Natural killer cell (primary cell): ENCODE measurements at regions of chr9 and their contacts with region 1.

Region 1: DNA sequence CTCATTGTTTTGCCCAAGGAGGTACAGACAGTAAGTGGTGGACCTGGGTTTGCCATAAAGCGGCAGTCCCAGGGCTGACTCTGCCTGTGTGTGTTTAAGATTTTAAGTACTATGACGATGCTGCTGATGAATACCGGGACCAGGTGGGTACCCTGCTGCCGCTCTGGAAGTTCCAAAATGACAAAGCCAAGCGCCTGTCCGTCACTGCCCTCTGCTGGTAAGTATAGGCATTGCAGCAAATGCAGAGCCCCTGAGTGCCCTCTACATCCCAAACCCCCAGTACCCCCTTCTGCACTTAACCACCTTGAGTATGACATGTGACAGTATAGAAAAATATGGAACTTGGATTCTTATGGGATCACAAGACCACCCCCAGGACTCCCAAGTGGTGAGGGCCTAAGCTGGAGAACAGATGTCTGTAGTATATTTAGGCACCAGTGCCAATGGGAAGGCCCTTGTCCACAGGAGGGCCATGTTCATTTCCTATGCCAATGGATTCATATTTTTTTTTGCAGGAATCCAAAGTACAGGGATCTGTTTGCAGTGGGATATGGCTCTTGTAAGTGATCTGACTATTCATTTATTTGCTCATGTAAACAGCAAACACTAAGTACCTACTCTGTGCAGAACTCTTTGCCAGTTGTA is 22.0 kb downstream of the ENHO start:
- DNase-seq: peak; percentile 66 to 82
- ATAC-seq: peak; percentile 77 to 99 (median 93)
- H3K4me3 ChIP-seq: no peak overlapping the region
- H3K4me3 Mint-ChIP-seq: no peak overlapping the region
- H3K27ac ChIP-seq: no peak overlapping the region
- H3K27ac Mint-ChIP-seq: no peak overlapping the region
- H3K4me1 ChIP-seq: no peaks in the 10 kb centered on the region
- H3K4me1 Mint-ChIP-seq: no peaks in the 10 kb centered on the region
- H3K27me3 ChIP-seq: no peaks in the 10 kb centered on the region
- H3K27me3 Mint-ChIP-seq: peaks cover 25 to 32% of the 10 kb centered on the region in 2 donors
- CTCF ChIP-seq: peak; percentile 93

Region 2: DNA sequence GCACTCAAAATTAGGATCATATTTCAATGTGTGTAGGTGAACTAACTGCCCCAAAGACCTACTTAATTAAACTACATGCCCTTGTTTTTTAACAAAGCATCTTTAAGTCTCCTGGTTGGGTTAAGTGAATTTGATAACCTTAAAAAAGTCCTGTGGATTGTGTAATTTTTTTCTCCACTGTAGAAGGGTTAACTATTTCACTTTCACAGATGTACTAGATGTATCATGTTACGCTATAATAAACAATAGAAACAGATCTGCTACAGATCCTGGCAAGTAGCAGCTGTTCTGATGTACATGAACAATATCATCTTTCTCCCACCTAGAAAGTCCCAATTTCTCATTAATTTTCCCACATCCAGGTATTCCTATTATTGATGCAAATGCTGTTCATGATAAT is 190.5 kb before region 1 on chr9:
- intact Hi-C with region 1: no loop called
- DNase-seq: no peak
- ATAC-seq: no peak
- H3K4me3 ChIP-seq: no peak overlapping the region
- H3K4me3 Mint-ChIP-seq: no peak overlapping the region
- H3K27ac ChIP-seq: no peak overlapping the region
- H3K27ac Mint-ChIP-seq: no peak overlapping the region
- H3K4me1 ChIP-seq: no peaks in the 10 kb centered on the region
- H3K4me1 Mint-ChIP-seq: no peaks in the 10 kb centered on the region
- H3K27me3 ChIP-seq: no peaks in the 10 kb centered on the region
- H3K27me3 Mint-ChIP-seq: no peaks in the 10 kb centered on the region
- CTCF ChIP-seq: no peak

Region 3: GRCh38 chr9:34403554-34404380 is 97.0 kb before region 1 on chr9:
- intact Hi-C with region 1: loop called (anchors 1 kb)
- DNase-seq: peak; percentile 41 to 73
- ATAC-seq: peak in 2 of 3 donors; percentile 62 to 70
- H3K4me3 ChIP-seq: no peak overlapping the region
- H3K4me3 Mint-ChIP-seq: no peak overlapping the region
- H3K27ac ChIP-seq: no peak overlapping the region
- H3K27ac Mint-ChIP-seq: no peak overlapping the region
- H3K4me1 ChIP-seq: no peaks in the 10 kb centered on the region
- H3K4me1 Mint-ChIP-seq: no peaks in the 10 kb centered on the region
- H3K27me3 ChIP-seq: no peaks in the 10 kb centered on the region
- H3K27me3 Mint-ChIP-seq: no peaks in the 10 kb centered on the region
- CTCF ChIP-seq: peak; percentile 96

Region 4: DNA sequence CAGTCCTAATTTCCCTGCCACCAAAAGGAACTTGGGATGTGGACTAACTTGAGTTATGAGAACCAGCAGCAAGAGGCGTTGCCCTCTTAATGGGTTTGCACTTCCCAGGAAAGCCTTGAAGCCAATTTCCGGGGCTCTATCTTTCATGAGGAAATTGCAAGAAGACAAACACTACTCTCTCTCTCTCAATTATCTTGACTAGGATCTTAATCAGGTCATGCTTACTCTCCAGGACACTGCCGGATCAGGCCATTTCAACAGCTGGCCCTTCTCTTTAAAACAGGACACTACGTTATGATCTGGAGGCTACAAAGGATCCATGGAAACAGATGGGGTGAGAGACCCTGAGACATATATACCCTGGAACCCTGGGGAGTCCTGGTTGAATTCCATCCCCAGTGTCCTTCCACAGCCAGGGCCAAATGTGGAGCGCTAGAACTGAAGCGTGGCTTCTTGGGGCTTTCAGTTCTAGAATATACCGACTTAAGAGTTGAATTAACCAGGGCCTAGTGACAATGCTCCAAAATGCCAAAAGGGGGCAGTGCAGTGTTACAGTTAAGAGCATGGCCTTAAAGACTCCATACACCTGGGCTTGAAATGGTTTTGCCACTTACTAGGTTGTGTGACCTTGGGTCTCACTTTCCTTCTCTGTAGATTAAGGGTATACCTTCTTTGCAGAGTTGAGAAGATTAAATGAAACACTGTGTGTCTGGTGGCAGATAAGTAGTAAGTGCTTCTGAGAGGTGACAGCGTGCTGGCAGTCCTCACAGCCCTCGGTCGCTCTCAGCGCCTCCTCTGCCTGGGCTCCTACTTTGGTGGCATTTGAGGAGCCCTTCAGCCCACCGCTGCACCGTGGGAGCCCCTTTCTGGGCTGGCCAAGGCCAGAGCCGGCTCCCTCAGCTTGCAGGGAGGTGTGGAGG is 63.5 kb before region 1 on chr9:
- intact Hi-C with region 1: loop called (anchors 1 kb)
- DNase-seq: peak; percentile 27 to 88
- ATAC-seq: peak; percentile 89 to 93 (median 92)
- H3K4me3 ChIP-seq: no peak overlapping the region
- H3K4me3 Mint-ChIP-seq: no peak overlapping the region
- H3K27ac ChIP-seq: no peak overlapping the region
- H3K27ac Mint-ChIP-seq: no peak overlapping the region
- H3K4me1 ChIP-seq: peaks cover 3% of the 10 kb centered on the region
- H3K4me1 Mint-ChIP-seq: peaks cover 7 to 12% of the 10 kb centered on the region in 2 donors
- H3K27me3 ChIP-seq: no peaks in the 10 kb centered on the region
- H3K27me3 Mint-ChIP-seq: no peaks in the 10 kb centered on the region
- CTCF ChIP-seq: peak; percentile 73

Region 5: GRCh38 chr9:34513567-34514214 is 12.9 kb after region 1 on chr9:
- intact Hi-C with region 1: no loop called
- DNase-seq: no peak
- ATAC-seq: no peak
- H3K4me3 ChIP-seq: no peak overlapping the region
- H3K4me3 Mint-ChIP-seq: no peak overlapping the region
- H3K27ac ChIP-seq: no peak overlapping the region
- H3K27ac Mint-ChIP-seq: no peak overlapping the region
- H3K4me1 ChIP-seq: peaks cover 4% of the 10 kb centered on the region
- H3K4me1 Mint-ChIP-seq: no peaks in the 10 kb centered on the region
- H3K27me3 ChIP-seq: no peaks in the 10 kb centered on the region
- H3K27me3 Mint-ChIP-seq: no peaks in the 10 kb centered on the region
- CTCF ChIP-seq: no peak